Gastrocnemius medialis (tissue), 4 donors: ENCODE measurements at regions of chr1 and their contacts with region 1.

Region 1: GRCh38 chr1:234722904-234723720 is 113.1 kb upstream of the IRF2BP2 start:
- DNase-seq: peak in 1 of 2 donors; percentile 73
- ATAC-seq: peak; percentile 6 to 11
- H3K4me3 ChIP-seq: peak overlapping the region; percentile 5 to 27 (median 10)
- H3K27ac ChIP-seq: peak overlapping the region; percentile 93 to 98 (median 96)
- H3K4me1 ChIP-seq: peaks cover 95 to 96% of the 10 kb centered on the region in 2 donors
- H3K27me3 ChIP-seq: no peaks in the 10 kb centered on the region
- CTCF ChIP-seq: no peak
- POLR2A ChIP-seq: no peak

Region 2: GRCh38 chr1:234533975-234534876 is 188.9 kb before region 1 on chr1:
- in situ Hi-C with region 1: no loop called
- intact Hi-C with region 1: loop called (anchors 2 kb)
- DNase-seq: peak; percentile 79 to 89
- ATAC-seq: no peak
- H3K4me3 ChIP-seq: no peak overlapping the region
- H3K27ac ChIP-seq: peak overlapping the region; percentile 93 to 100 (median 98)
- H3K4me1 ChIP-seq: peaks cover 98% of the 10 kb centered on the region in 2 donors
- H3K27me3 ChIP-seq: no peaks in the 10 kb centered on the region
- CTCF ChIP-seq: no peak
- POLR2A ChIP-seq: no peak

Region 3: DNA sequence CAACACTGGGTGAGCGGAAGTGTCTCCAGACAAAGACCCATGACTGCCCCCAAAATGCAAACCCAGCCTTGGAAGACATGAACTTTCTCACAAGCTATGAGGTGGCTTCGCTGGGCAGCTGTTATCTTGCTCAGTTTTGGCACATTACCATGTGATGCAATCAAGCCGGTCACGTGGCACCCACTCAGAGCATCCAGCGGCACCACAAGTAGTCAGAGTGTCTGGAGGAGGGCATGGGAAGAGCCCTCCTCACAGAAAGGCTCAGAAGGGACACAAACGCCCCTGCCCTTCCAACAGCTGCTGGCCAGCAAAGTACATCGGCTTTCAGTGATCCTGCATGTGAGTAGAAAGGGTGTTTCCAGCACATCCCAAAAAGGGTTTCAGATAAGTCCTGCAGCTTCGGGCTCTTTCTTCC is 32.3 kb after region 1 on chr1:
- in situ Hi-C with region 1: no loop called
- intact Hi-C with region 1: loop called (anchors 2 kb)
- DNase-seq: peak; percentile 80 to 91
- ATAC-seq: peak; percentile 98 to 100
- H3K4me3 ChIP-seq: no peak overlapping the region
- H3K27ac ChIP-seq: peak overlapping the region in 2 of 4 donors; percentile 12 to 40
- H3K4me1 ChIP-seq: peaks cover 3 to 9% of the 10 kb centered on the region in 2 donors
- H3K27me3 ChIP-seq: no peaks in the 10 kb centered on the region
- CTCF ChIP-seq: no peak
- POLR2A ChIP-seq: peak; percentile 38 to 50

Region 4: DNA sequence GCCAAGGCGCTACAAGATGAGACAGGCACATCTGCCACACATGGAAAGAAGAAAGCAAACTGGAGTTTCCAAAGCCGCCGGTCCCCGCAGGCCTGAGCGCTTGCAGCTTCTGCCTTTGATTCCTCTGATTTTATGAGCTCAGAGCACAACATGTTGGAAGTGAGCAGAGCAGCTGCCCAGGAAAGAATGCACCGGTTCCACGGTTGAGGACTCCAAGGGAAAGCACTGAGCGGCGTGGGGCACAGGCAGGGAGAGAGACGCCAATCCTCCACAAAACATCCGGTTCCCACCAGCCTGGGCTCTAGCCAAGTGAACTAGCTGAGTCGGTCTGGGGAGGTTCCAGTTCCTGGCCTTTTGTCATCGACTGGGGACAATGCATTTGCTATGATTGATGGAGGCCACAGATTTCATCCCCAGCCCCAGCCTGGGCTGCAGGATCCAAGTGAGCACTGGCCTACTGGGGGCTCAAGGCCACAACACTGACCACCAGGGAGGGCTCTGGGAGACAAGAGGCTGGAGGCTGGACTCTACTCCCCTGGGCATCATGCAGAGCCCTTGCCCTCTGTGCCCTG is 139.9 kb after region 1 on chr1:
- in situ Hi-C with region 1: loop called in 2 of 4 experiments (anchors 10 to 25 kb)
- intact Hi-C with region 1: no loop called
- DNase-seq: peak; percentile 51 to 70
- ATAC-seq: peak; percentile 20 to 30
- H3K4me3 ChIP-seq: peak overlapping the region in 2 of 4 donors; percentile 2 to 17
- H3K27ac ChIP-seq: peak overlapping the region; percentile 68 to 84 (median 75)
- H3K4me1 ChIP-seq: peaks cover 39 to 40% of the 10 kb centered on the region in 2 donors
- H3K27me3 ChIP-seq: no peaks in the 10 kb centered on the region
- CTCF ChIP-seq: no peak
- POLR2A ChIP-seq: no peak

Region 5: GRCh38 chr1:234970731-234971476 is 247.8 kb after region 1 on chr1:
- in situ Hi-C with region 1: no loop called
- intact Hi-C with region 1: loop called (anchors 5 kb)
- DNase-seq: peak; percentile 83 to 93
- ATAC-seq: peak; percentile 84
- H3K4me3 ChIP-seq: peak overlapping the region; percentile 48 to 65 (median 55)
- H3K27ac ChIP-seq: peak overlapping the region; percentile 87 to 94 (median 90)
- H3K4me1 ChIP-seq: peaks cover 58 to 59% of the 10 kb centered on the region in 2 donors
- H3K27me3 ChIP-seq: no peaks in the 10 kb centered on the region
- CTCF ChIP-seq: no peak
- POLR2A ChIP-seq: peak; percentile 56 to 75

Region 6: GRCh38 chr1:235075188-235075926 is 352.2 kb after region 1 on chr1:
- in situ Hi-C with region 1: loop called (anchors 5 to 25 kb)
- intact Hi-C with region 1: loop called (anchors 2 kb)
- DNase-seq: peak; percentile 83 to 91
- ATAC-seq: peak; percentile 4 to 14
- H3K4me3 ChIP-seq: peak overlapping the region in 3 of 4 donors; percentile 10 to 34 (median 32)
- H3K27ac ChIP-seq: peak overlapping the region; percentile 87 to 100 (median 95)
- H3K4me1 ChIP-seq: peaks cover 77 to 82% of the 10 kb centered on the region in 2 donors
- H3K27me3 ChIP-seq: no peaks in the 10 kb centered on the region
- CTCF ChIP-seq: no peak
- POLR2A ChIP-seq: peak; percentile 80 to 85